RWPE1 (cell line): ENCODE measurements at regions of chr1 and their contacts with region 1.

Region 1: GRCh38 chr1:31789259-31790065 is 25.3 kb upstream of the ADGRB2 start:
- DNase-seq: peak; percentile 94
- H3K27ac ChIP-seq: peak overlapping the region; percentile 85
- CTCF ChIP-seq: peak; percentile 94

Region 2: DNA sequence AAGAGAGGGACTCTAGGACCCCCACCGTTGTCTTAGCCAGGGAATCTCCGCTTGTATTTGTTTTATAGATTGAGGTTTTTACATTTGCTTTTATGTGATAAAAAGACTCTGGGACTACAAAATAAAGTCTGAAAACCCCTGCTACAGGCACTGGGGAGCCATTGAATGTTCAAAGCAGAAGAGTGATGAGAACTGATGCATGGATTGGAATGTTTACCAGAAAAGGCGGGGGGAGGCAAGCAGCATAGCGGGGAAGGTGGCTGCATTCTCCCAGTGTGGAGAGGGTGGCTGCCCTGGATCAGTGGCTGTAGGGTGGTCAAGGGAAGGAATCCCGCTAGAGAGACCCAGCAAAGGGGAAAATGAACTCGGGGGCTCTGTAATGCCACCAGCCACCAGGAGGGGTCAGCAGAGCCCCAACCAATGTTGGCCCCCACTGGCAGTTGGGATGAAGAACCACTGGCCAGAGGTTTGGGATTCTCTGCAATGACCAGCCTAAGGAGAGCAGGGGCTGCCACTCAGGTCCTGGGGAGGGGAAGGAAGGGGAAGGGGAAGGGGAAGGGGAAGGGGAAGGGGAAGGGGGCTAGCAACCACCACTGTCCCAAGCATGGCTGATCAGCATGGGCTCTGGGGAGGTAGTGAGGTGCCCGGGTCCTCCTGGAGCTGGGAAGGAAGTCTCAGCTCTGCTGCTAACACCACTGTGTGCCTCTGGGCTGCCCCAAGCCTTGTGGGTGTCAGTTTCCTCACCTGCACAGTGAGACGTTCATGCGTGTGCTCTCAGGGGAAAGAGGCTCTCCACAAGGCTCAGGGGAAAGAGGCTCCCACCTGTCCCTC is 125.6 kb before region 1 on chr1:
- CTCF ChIA-PET with region 1: interaction called, 24 read pairs
- POLR2A ChIA-PET with region 1: interaction called, 3 read pairs
- DNase-seq: peak; percentile 59
- H3K27ac ChIP-seq: peak overlapping the region; percentile 97
- CTCF ChIP-seq: peak; percentile 82

Region 3: GRCh38 chr1:31669786-31670592 is 119.5 kb before region 1 on chr1:
- CTCF ChIA-PET with region 1: interaction called, 24 read pairs
- POLR2A ChIA-PET with region 1: no interaction called
- DNase-seq: peak; percentile 77
- H3K27ac ChIP-seq: peak overlapping the region; percentile 97
- CTCF ChIP-seq: peak; percentile 49; the same call in 1 of the 2 replicates

Region 4: GRCh38 chr1:31762726-31763670 is 26.5 kb before region 1 on chr1:
- CTCF ChIA-PET with region 1: interaction called, 18 read pairs
- POLR2A ChIA-PET with region 1: interaction called, 3 read pairs
- DNase-seq: peak; percentile 73
- H3K27ac ChIP-seq: peak overlapping the region; percentile 20
- CTCF ChIP-seq: peak; percentile 83

Region 5: GRCh38 chr1:31831397-31832378 is 42.2 kb after region 1 on chr1:
- CTCF ChIA-PET with region 1: no interaction called
- POLR2A ChIA-PET with region 1: no interaction called
- DNase-seq: no peak
- H3K27ac ChIP-seq: no peak overlapping the region
- CTCF ChIP-seq: no peak

Region 6: DNA sequence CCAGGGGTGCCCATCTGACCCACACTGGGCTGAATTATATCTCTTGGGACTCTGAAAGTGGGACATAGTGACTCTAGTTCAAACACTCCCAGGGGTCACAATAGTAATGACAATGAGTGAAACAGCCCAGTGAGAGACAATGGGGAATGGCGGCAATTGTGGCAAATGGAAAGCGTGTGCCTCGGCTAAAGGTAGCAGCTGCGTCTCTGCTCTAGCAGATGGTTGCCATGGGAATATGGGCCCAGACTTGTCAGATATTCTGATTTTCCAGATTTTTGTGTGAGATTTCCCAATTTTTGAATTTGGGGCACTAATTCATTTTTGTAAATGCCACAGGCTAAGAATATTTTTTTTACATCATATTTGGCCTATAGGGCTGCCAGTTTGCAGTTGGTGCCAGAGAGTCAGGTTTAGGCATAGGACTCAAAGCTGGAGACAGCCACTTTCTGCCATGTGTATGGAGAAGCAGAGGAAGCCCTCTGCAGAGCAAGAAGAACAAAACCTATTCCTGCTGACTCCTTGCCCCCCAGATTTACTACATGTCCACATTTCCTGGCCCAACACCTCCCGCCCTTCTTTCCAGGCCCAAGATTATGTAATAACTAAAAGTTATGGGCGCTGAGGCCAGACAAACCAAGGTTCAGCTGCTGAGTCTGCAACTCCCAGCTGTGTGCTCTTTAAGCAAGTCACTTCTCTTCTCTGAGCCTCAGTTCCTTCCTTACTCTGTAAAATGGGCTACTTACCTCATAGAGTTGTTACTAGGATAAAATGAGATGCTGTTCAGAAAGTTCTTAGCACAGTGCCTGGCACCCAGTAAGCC is 170.3 kb after region 1 on chr1:
- CTCF ChIA-PET with region 1: interaction called, 11 read pairs
- POLR2A ChIA-PET with region 1: no interaction called
- DNase-seq: no peak
- H3K27ac ChIP-seq: no peak overlapping the region
- CTCF ChIP-seq: no peak